ENCODE measurements at regions of chr1 and their contacts with region 1.

Region 1: DNA sequence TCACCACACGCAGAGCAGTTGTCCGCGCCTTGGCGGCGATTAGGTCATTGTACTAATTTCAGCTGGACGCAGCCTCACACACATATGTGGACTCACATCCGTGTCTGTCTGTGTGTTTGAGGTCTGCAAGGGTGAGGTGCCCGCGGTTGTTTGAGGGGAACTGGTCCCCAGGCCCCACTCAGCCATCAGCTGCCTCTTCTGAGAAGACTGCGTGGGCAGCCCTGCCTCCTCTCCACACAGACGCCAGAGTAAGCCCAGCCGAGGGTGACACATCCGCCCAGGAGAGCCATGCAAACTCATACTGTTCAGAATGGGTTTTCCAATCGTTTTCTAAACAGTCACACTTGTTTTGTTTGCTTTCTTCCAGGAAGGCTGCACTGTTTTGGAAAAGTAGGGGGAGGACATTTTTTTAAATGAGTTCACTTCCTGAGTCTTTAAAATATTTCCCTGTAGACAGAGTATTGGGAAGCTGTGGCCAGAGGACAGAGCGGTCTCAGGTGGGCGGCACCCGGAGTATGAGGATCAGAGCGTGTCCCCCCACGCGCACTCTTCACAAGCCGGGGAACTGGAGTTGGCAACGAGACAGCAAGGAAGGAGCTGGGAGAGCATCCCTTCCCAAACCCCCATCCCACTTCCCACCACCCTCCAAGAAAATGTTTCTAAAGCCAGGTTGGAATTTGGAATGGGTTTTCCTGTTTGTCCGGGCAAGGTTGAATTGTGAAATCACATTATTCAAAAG is 53.3 kb downstream of the TOMM20 start:
- DNase-seq: peak in 1 of 2 experiments; percentile 42
- H3K4me3 ChIP-seq: no peak overlapping the region
- H3K4me3 Mint-ChIP-seq: no peak overlapping the region
- H3K27ac Mint-ChIP-seq: peak overlapping the region; percentile 89
- H3K4me1 ChIP-seq: peaks cover 58% of the 10 kb centered on the region
- H3K4me1 Mint-ChIP-seq: peaks cover 21% of the 10 kb centered on the region
- H3K27me3 ChIP-seq: no peaks in the 10 kb centered on the region
- H3K27me3 Mint-ChIP-seq: no peaks in the 10 kb centered on the region
- CTCF ChIP-seq: no peak

Region 2: GRCh38 chr1:234893725-234894630 is 181.4 kb before region 1 on chr1:
- CTCF ChIA-PET with region 1: no interaction called
- POLR2A ChIA-PET with region 1: no interaction called
- intact Hi-C with region 1: loop called (anchors 10 kb)
- DNase-seq: no peak
- H3K4me3 ChIP-seq: no peak overlapping the region
- H3K4me3 Mint-ChIP-seq: no peak overlapping the region
- H3K27ac Mint-ChIP-seq: no peak overlapping the region
- H3K4me1 ChIP-seq: peaks cover 22% of the 10 kb centered on the region
- H3K4me1 Mint-ChIP-seq: peaks cover 26% of the 10 kb centered on the region
- H3K27me3 ChIP-seq: no peaks in the 10 kb centered on the region
- H3K27me3 Mint-ChIP-seq: no peaks in the 10 kb centered on the region
- CTCF ChIP-seq: no peak

Region 3: DNA sequence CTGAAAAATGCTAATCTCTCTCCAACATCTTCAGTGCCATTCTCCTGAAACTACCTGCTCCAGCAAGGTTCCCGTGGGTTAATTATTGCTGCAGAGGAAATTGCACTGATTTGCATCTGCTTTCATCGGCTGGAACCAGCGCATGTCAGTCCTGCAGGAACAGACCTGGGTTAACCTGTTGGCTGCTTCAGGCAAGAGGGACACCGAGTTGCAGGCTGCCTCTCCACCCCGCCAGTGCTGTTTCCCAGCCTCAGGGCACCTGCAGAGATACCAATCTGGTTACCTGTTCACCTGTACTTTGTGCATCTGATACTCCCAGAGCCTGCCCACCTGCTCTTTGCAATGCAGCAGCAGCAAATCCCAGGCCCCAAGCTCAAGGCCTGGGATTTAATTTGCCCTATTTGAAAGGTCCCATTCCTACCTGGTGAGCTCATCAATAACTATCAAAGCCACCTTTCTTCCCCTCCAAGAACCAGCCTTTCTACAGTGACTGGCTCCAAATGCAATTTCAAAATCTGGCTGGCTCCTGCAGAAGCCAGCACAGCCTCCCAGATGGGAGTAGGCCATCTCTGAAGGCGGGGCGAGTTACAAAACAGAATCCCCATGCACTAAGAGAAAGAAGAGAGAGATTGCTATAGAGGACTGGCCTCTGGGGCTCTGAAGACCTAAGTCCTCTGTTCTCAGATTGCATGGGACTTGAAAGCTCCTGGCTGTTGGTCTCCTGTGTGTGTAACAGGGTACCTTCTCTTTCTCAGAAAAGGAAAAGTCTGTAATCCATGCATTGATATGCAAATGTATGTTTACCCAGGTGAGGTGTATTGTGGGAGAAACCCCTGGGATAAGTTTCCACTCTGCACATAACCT is 14.5 kb before region 1 on chr1:
- CTCF ChIA-PET with region 1: interaction called, 3 read pairs
- POLR2A ChIA-PET with region 1: interaction called, 3 read pairs
- intact Hi-C with region 1: loop called (anchors 2 kb)
- DNase-seq: peak; percentile 78 to 88
- H3K4me3 ChIP-seq: no peak overlapping the region
- H3K4me3 Mint-ChIP-seq: peak overlapping the region; percentile 51
- H3K27ac Mint-ChIP-seq: peak overlapping the region; percentile 95
- H3K4me1 ChIP-seq: peaks cover 41% of the 10 kb centered on the region
- H3K4me1 Mint-ChIP-seq: peaks cover 51% of the 10 kb centered on the region
- H3K27me3 ChIP-seq: no peaks in the 10 kb centered on the region
- H3K27me3 Mint-ChIP-seq: no peaks in the 10 kb centered on the region
- CTCF ChIP-seq: no peak

Measured in Caco-2 (cell line).